ENCODE measurements at regions of chr2 and their contacts with region 1.

Region 1: DNA sequence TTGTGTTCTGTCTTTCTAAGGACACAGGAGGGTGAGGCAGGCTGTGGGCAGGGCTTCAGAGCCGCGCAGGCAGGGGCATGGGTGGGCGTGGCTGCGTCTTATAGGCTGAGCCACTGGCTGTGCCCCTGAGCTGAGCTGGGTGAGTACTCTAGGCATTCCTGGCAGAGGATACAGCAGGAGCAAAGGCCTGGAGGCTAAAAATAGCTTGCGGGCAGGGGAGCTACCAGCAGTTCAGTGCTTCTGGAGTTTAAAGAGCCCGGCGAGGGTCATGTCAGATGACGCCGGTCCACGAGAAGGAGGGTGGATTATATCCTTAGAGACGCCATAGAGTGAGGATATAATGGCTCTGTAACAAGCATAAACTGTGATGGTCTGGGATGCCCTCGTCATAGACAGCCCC is 31.5 kb upstream of the PDIA6 start:
- DNase-seq: peak; percentile 90

Region 2: DNA sequence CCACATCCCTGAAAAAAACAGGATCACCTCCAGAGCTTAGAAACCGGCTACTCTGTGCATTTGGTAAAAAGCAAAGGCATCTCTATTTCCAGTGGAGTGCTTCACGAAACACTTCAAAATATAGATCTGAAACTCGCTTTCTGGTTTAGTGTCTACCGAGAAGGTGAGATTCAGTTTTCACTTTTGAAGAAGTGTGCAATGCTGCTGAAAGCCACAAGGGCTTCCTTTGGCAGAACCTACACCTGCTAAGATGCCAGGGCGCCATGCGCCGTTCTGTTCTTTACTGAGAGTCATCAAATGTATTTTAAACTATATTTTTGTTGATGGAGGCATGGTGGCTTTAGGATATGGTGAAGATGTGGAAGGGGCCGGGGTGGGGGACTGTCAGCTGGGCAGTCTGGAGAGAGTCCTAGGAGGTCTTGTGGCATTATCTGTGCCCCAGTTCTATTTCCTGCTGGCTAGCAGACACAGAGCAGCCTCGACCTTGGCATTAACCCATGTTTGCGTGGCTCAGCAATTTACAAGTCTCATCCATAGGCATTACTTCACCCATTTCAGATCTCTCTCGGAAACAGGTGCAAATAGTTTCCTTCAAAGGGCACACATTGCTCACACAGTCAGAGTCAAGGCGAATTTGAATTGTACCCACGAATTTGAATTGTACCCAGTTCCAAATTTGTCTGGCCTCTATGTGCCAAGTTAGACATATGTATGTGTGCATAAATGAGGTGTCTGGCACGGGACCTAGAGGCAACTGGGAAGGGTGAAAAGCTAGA is 21.0 kb after region 1 on chr2:
- intact Hi-C with region 1: loop called (anchors 2 kb)
- DNase-seq: peak; percentile 50

Region 3: GRCh38 chr2:10873790-10874437 is 29.8 kb after region 1 on chr2:
- intact Hi-C with region 1: loop called (anchors 2 kb)
- DNase-seq: peak; percentile 74

Region 4: GRCh38 chr2:11187083-11187619 is 343.1 kb after region 1 on chr2:
- intact Hi-C with region 1: no loop called
- DNase-seq: no peak

Measured in cardiac septum (tissue), 1 donor.